ENCODE measurements at regions of chr1 and their contacts with region 1.

Region 1: GRCh38 chr1:109426278-109427170 is at the start of gene PSMA5:
- DNase-seq: peak; percentile 99
- H3K4me3 ChIP-seq: peak within 1 kb of the TSS; percentile 60 to 99 (median 86)
- H3K27ac ChIP-seq: peak within 1 kb of the TSS; percentile 86 to 94 (median 92)
- H3K4me1 ChIP-seq: peaks cover 4 to 41% (median 26%) of the 10 kb centered on the region in 4 donors
- H3K27me3 ChIP-seq: no peaks in the 10 kb centered on the region
- CTCF ChIP-seq: no peak
- EP300 ChIP-seq: peak in 1 of 4 donors; percentile 16
- POLR2A ChIP-seq: peak; percentile 33 to 82
- total RNA-seq, gene PSMA5: 18.8 to 57.6 (median 25.8) TPM

Region 2: DNA sequence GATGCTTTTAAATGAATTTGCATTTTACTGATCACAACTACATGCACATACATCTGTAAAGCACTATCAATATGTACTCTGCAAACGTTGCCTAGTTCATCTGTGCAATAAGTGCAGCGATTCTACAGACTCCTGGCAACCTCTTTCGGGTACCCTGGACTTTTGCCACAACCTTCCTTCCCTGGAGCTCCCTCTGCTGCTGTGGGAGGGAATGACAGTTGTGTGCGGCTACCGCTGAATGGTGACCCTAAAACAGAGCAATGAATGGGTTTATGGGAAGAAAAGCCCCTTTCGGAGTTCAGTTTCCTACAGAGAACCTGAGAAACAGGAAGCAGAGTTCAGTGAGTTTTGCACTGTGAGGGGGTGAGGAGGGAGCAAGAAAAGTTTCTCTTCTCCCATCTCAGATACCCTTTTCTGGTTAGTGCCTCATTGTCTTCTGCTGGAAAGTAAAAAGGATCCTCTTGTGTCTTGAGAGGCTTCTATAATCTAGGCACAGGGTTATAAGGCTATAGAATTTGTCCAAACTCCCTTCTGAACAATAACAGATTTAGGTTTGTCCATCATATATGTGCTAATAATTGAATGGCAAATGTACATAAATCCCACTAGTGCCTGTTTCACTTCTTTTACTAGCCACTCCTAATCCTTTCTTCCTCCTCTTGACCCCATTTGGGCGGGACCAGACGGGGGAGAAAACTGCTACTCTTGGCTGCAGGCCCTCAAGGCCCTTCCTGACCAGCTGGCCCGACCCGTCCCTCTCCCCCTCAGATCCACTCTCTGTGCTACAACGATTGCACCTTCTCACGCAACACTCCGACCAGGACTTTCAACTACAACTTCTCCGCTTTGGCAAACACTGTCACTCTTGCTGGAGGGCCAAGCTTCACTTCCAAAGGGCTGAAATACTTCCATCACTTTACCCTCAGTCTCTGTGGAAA is 232.6 kb before region 1 on chr1:
- intact Hi-C with region 1: no loop called
- DNase-seq: no peak
- H3K4me3 ChIP-seq: no peak overlapping the region
- H3K27ac ChIP-seq: no peak overlapping the region
- H3K4me1 ChIP-seq: peaks cover 0 to 12% (median 9%) of the 10 kb centered on the region in 4 donors
- H3K27me3 ChIP-seq: no peaks in the 10 kb centered on the region
- CTCF ChIP-seq: peak in 2 of 4 experiments; percentile 13 to 47
- EP300 ChIP-seq: no peak
- POLR2A ChIP-seq: no peak

Region 3: GRCh38 chr1:109466452-109467300 is 40.2 kb after region 1 on chr1 and contains the start of gene SYPL2:
- intact Hi-C with region 1: loop called (anchors 2 kb)
- DNase-seq: peak; percentile 86
- H3K4me3 ChIP-seq: peak within 1 kb of the TSS; percentile 49 to 80 (median 60)
- H3K27ac ChIP-seq: peak within 1 kb of the TSS; percentile 63 to 85 (median 83)
- H3K4me1 ChIP-seq: peaks cover 0 to 34% (median 24%) of the 10 kb centered on the region in 4 donors
- H3K27me3 ChIP-seq: no peaks in the 10 kb centered on the region
- CTCF ChIP-seq: peak in 1 of 4 experiments; percentile 16
- EP300 ChIP-seq: no peak
- POLR2A ChIP-seq: no peak
- total RNA-seq, gene SYPL2: 2.1 to 6.9 (median 3.2) TPM

Region 4: GRCh38 chr1:109483672-109484518 is 57.4 kb after region 1 on chr1 and contains the start of gene ATXN7L2:
- intact Hi-C with region 1: loop called (anchors 5 kb)
- DNase-seq: peak; percentile 97
- H3K4me3 ChIP-seq: peak within 1 kb of the TSS; percentile 72 to 77 (median 74)
- H3K27ac ChIP-seq: peak within 1 kb of the TSS; percentile 91 to 98 (median 94)
- H3K4me1 ChIP-seq: peaks cover 0 to 22% (median 20%) of the 10 kb centered on the region in 4 donors
- H3K27me3 ChIP-seq: no peaks in the 10 kb centered on the region
- CTCF ChIP-seq: no peak
- EP300 ChIP-seq: no peak
- POLR2A ChIP-seq: no peak
- total RNA-seq, gene ATXN7L2: 2.0 to 12.2 (median 3.1) TPM

Measured in sigmoid colon (tissue), 7 donors.